Activated T-helper 2 cell treated with anti-CD3 and anti-CD28 coated beads, Interferon-gamma antibody, Interleukin-2, Interleukin-4, amounts not matched to agents 10 μg/mL and 5 μg/mL and 100 μg/mL, durations not matched to agents 14 hours and 24 hours and 36 hours (primary cell): ENCODE measurements at regions of chr10 and their contacts with region 1.

Region 1: DNA sequence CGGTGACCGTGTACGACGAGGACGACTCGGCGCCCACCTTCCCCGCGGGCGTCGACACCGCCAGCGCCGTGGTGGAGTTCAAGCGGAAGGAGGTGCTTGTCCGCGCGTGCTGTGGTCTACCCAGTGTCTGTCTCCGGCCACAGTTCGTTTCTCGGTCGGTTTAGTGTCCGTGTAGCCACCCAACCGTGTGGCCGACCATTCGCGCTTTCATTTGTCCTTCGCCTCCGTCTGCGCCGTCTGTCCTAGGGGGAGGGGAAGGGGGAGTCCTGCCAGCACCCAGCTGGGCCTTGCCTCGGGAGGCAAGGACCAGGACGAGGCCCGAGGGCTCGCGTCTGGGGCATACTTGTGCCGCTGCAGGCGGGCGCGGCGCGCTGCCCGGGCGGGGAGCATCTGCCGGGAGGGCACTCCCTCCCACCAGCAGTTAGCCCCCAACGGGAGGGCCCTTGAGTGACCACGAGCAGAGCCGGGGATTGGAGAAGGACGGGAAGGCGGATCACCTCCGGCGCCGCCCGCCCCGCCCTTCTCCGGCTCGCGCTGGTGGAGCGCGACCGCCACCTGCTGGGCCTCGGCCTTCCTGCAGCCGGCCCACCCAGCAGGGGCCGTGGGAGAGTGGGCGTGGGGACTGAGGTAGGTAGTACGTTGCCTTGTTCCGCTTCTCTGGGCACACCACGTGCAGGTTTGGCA is 28.4 kb downstream of the RET start:
- DNase-seq: peak; percentile 71
- H3K4me3 Mint-ChIP-seq: peak overlapping the region; percentile 72
- H3K27ac Mint-ChIP-seq: peak overlapping the region; percentile 52
- H3K4me1 Mint-ChIP-seq: peaks cover 4% of the 10 kb centered on the region
- H3K27me3 Mint-ChIP-seq: peaks cover 21% of the 10 kb centered on the region

Region 2: DNA sequence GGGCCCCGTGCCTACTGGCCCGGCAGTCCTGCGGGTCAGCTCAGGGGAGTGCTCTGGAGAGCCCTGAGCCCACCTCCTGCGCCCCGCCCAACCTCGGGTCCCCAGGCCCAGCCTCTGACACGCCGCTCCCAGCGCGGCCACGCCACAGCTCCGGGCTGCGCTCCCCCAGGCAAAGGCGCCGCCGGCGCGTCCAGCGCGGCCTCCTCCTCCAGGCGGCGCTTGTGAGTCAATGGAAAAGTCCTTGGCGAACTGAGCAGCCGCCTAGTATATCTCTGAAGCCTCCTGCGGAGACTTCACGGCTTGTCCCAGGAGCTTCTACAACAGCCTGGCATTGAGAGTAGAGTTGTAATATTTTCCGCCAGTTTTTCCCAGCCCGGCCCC is 352.1 kb before region 1 on chr10:
- intact Hi-C with region 1: loop called (anchors 1 kb)
- DNase-seq: peak; percentile 58
- H3K4me3 Mint-ChIP-seq: peak overlapping the region; percentile 26
- H3K27ac Mint-ChIP-seq: no peak overlapping the region
- H3K4me1 Mint-ChIP-seq: peaks cover 5% of the 10 kb centered on the region
- H3K27me3 Mint-ChIP-seq: peaks cover 56% of the 10 kb centered on the region

Region 3: GRCh38 chr10:42866115-42866995 is 238.9 kb before region 1 on chr10:
- intact Hi-C with region 1: loop called (anchors 1 kb)
- DNase-seq: peak; percentile 31
- H3K4me3 Mint-ChIP-seq: no peak overlapping the region
- H3K27ac Mint-ChIP-seq: no peak overlapping the region
- H3K4me1 Mint-ChIP-seq: peaks cover 2% of the 10 kb centered on the region
- H3K27me3 Mint-ChIP-seq: peaks cover 39% of the 10 kb centered on the region